Thyroid gland (tissue), 4 donors: ENCODE measurements at regions of chr1 and their contacts with region 1.

Region 1: GRCh38 chr1:16946646-16947045 is 24.9 kb downstream of the CROCC start:
- DNase-seq: no peak
- H3K4me3 ChIP-seq: no peak overlapping the region
- H3K27ac ChIP-seq: no peak overlapping the region
- H3K4me1 ChIP-seq: peaks cover 0 to 12% of the 10 kb centered on the region in 2 donors
- H3K27me3 ChIP-seq: no peaks in the 10 kb centered on the region
- CTCF ChIP-seq: no peak
- POLR2A ChIP-seq: no peak

Region 2: GRCh38 chr1:16618719-16619118 is 327.9 kb before region 1 on chr1:
- intact Hi-C with region 1: loop called (anchors 5 kb)
- DNase-seq: no peak
- H3K4me3 ChIP-seq: no peak overlapping the region
- H3K27ac ChIP-seq: no peak overlapping the region
- H3K4me1 ChIP-seq: peaks cover 3 to 5% of the 10 kb centered on the region in 2 donors
- H3K27me3 ChIP-seq: no peaks in the 10 kb centered on the region
- CTCF ChIP-seq: peak in 1 of 6 experiments; percentile 4
- POLR2A ChIP-seq: no peak

Region 3: DNA sequence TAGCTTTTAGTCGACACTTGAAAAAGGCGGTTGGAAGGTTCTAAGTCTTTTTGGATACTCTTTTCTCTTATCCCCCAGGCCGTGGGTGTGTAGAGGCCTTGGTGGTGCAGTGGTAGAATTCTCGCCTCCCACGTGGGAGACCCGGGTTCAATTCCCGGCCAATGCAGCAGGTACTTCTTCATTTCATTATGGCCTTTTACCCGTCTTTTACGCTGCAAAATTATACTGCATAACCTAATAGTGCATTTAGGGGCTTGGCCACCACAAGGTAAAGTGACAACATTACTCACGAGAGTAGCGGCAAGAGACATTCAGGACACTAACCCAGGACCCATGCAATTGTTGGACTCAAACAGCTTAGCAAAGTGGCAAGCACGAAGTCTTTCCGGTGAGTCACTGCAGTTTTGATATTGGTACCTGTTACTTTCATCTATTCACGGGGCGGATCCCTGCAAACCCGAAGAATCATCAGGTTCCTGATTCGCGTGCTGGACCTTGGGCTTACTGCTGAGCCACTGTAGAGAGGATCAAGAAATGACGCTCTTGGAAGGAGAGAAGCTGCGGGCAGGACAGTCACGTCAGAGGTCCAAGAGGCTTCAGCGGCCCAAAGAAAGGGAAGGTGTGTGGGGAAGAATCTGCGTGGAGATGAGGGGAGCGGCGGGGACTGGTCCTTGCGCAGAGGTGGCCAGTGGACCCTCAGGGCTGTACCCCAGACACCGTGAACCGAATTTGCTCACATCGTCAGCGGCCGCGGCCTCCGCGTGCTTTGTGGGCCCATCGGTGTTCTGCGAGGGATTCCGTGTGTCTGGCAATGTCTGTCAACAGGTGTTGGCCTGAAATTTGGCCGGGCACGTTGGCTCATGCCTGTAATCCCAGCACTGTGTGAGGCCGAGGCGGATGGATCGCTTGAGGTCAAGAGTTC is 219.2 kb before region 1 on chr1:
- intact Hi-C with region 1: no loop called
- DNase-seq: peak; percentile 4 to 9
- H3K4me3 ChIP-seq: no peak overlapping the region
- H3K27ac ChIP-seq: no peak overlapping the region
- H3K4me1 ChIP-seq: no peaks in the 10 kb centered on the region
- H3K27me3 ChIP-seq: peaks cover 5% of the 10 kb centered on the region
- CTCF ChIP-seq: no peak
- POLR2A ChIP-seq: no peak

Region 4: DNA sequence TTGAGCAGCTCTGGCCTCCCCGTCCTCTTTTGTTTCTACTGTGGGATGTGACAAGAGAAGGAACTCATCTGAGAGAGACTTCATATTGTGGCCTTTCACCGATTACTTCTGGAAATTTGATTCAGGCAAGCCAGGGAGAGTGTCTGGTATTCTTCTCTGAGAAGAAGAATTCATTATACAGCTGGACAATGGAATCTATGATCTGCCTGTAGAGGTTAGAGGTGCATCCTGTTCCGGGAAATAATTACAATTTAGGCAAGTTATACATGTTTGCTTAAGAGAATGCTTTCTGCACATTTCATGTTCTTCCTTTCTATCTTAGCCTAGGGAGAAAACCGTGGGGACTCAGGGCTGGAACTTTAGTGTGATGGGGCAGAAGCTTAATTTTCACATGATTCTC is 63.6 kb before region 1 on chr1:
- intact Hi-C with region 1: no loop called
- DNase-seq: no peak
- H3K4me3 ChIP-seq: no peak overlapping the region
- H3K27ac ChIP-seq: no peak overlapping the region
- H3K4me1 ChIP-seq: no peaks in the 10 kb centered on the region
- H3K27me3 ChIP-seq: no peaks in the 10 kb centered on the region
- CTCF ChIP-seq: no peak
- POLR2A ChIP-seq: no peak

Region 5: DNA sequence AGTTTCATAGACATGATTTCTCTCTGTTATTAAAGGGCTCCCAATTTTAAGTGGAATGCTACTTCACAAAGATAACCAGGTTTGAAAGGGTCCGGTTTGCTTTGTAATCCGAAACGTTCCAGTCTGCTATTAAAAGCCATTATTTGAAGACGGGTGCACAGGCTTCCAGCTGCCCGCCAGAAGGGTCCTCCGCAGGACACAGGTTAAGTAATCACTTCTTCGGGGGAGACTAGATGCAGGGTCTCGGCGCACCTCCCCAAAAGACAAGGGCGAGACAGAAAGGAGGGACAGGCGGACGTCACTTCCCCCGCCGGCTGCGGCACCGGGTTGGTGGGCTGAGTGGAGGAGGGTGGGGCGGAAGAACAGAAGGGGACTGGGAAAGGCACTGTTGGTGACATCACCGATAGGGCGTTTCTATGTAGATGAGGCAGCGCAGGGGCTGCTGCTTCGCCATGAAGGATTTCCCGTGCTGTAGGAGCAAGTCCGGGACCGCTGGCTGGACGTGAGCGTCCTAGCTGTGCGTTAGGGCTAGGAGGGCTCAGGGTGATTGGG is 42.0 kb before region 1 on chr1:
- intact Hi-C with region 1: no loop called
- DNase-seq: peak; percentile 100
- H3K4me3 ChIP-seq: peak overlapping the region; percentile 19 to 61 (median 40)
- H3K27ac ChIP-seq: peak overlapping the region; percentile 95 to 100 (median 99)
- H3K4me1 ChIP-seq: peaks cover 3 to 13% of the 10 kb centered on the region in 2 donors
- H3K27me3 ChIP-seq: no peaks in the 10 kb centered on the region
- CTCF ChIP-seq: no peak
- POLR2A ChIP-seq: peak; percentile 86 to 99